ENCODE measurements at regions of chr1 and their contacts with region 1.

Region 1: GRCh38 chr1:78132174-78132947 is 86.6 kb downstream of the GIPC2 start:
- DNase-seq: no peak
- H3K4me3 ChIP-seq: no peak overlapping the region
- H3K27ac ChIP-seq: no peak overlapping the region
- H3K4me1 ChIP-seq: no peaks in the 10 kb centered on the region
- H3K27me3 ChIP-seq: no peaks in the 10 kb centered on the region
- CTCF ChIP-seq: no peak
- EP300 ChIP-seq: no peak
- RAD21 ChIP-seq: no peak

Region 2: DNA sequence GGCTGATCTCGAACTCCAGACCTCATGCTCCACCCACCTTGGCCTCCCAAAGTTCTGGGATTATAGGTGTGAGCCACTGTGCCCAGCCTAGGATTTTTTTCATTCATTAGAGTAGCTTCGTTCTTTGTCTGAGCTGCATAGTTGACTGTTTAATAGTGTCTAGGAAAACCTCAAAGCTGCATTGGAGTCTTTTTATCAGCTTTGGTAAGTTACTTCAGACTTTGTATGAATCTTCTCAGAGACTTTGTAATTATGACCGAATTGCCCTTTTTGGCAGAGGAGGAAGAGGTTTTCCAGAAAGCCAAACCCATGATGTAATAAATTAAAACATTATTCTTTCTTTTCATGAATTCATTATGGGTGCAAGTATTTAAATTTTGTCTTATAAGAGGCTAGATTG is 122.5 kb before region 1 on chr1:
- CTCF ChIA-PET with region 1: no interaction called
- POLR2A ChIA-PET with region 1: no interaction called
- DNase-seq: no peak
- H3K4me3 ChIP-seq: peak overlapping the region in 1 of 2 experiments; percentile 44; a peak in 1 of 4 replicates
- H3K27ac ChIP-seq: no peak overlapping the region
- H3K4me1 ChIP-seq: no peaks in the 10 kb centered on the region; a peak in 2 of 4 replicates
- H3K27me3 ChIP-seq: no peaks in the 10 kb centered on the region
- CTCF ChIP-seq: no peak
- EP300 ChIP-seq: no peak
- RAD21 ChIP-seq: no peak

Region 3: GRCh38 chr1:78145105-78145580 is 12.8 kb after region 1 on chr1:
- CTCF ChIA-PET with region 1: interaction called, 61 read pairs
- POLR2A ChIA-PET with region 1: no interaction called
- DNase-seq: peak; percentile 48
- H3K4me3 ChIP-seq: no peak overlapping the region; a peak in 1 of 4 replicates
- H3K27ac ChIP-seq: peak overlapping the region in 1 of 2 experiments; percentile 62; a peak in 1 of 4 replicates
- H3K4me1 ChIP-seq: peaks cover 10 to 11% of the 10 kb centered on the region in 2 experiments; a peak in 3 of 4 replicates
- H3K27me3 ChIP-seq: no peaks in the 10 kb centered on the region
- CTCF ChIP-seq: peak; percentile 95
- EP300 ChIP-seq: no peak
- RAD21 ChIP-seq: peak; percentile 98

Region 4: GRCh38 chr1:78601068-78601467 is 468.7 kb after region 1 on chr1:
- CTCF ChIA-PET with region 1: interaction called, 207 read pairs
- POLR2A ChIA-PET with region 1: no interaction called
- DNase-seq: no peak
- H3K4me3 ChIP-seq: no peak overlapping the region
- H3K27ac ChIP-seq: no peak overlapping the region
- H3K4me1 ChIP-seq: no peaks in the 10 kb centered on the region
- H3K27me3 ChIP-seq: no peaks in the 10 kb centered on the region
- CTCF ChIP-seq: no peak
- EP300 ChIP-seq: no peak
- RAD21 ChIP-seq: no peak